PC-3 (cell line): ENCODE measurements at regions of chr4 and their contacts with region 1.

Region 1: GRCh38 chr4:166042510-166043055 is 169.5 kb downstream of the TLL1 start:
- DNase-seq: peak; percentile 11
- ATAC-seq: peak; percentile 75
- H3K4me3 ChIP-seq: peak overlapping the region; percentile 63
- H3K27ac ChIP-seq: peak overlapping the region; percentile 27; the same call in 1 of the 2 replicates
- H3K4me1 ChIP-seq: peaks cover 33% of the 10 kb centered on the region
- H3K27me3 ChIP-seq: no peaks in the 10 kb centered on the region
- CTCF ChIP-seq: no peak

Region 2: GRCh38 chr4:165971906-165972305 is 70.7 kb before region 1 on chr4:
- CTCF ChIA-PET with region 1: no interaction called
- POLR2A ChIA-PET with region 1: no interaction called
- intact Hi-C with region 1: loop called (anchors 2 kb)
- DNase-seq: peak; percentile 90
- ATAC-seq: peak; percentile 85
- H3K4me3 ChIP-seq: peak overlapping the region; percentile 30; the same call in 1 of the 2 replicates
- H3K27ac ChIP-seq: peak overlapping the region; percentile 89
- H3K4me1 ChIP-seq: peaks cover 34% of the 10 kb centered on the region
- H3K27me3 ChIP-seq: no peaks in the 10 kb centered on the region
- CTCF ChIP-seq: no peak

Region 3: GRCh38 chr4:166012129-166013078 is 30.2 kb before region 1 on chr4:
- CTCF ChIA-PET with region 1: no interaction called
- POLR2A ChIA-PET with region 1: no interaction called
- intact Hi-C with region 1: loop called (anchors 2 kb)
- DNase-seq: peak; percentile 71
- ATAC-seq: peak; percentile 73
- H3K4me3 ChIP-seq: peak overlapping the region; percentile 48
- H3K27ac ChIP-seq: peak overlapping the region; percentile 91
- H3K4me1 ChIP-seq: peaks cover 44% of the 10 kb centered on the region
- H3K27me3 ChIP-seq: no peaks in the 10 kb centered on the region
- CTCF ChIP-seq: no peak

Region 4: GRCh38 chr4:166078955-166079354 is 36.4 kb after region 1 on chr4:
- CTCF ChIA-PET with region 1: no interaction called
- POLR2A ChIA-PET with region 1: no interaction called
- intact Hi-C with region 1: loop called (anchors 5 kb)
- DNase-seq: peak; percentile 46
- ATAC-seq: no peak
- H3K4me3 ChIP-seq: no peak overlapping the region
- H3K27ac ChIP-seq: no peak overlapping the region
- H3K4me1 ChIP-seq: peaks cover 34% of the 10 kb centered on the region
- H3K27me3 ChIP-seq: no peaks in the 10 kb centered on the region
- CTCF ChIP-seq: no peak